ENCODE measurements at regions of chr17 and their contacts with region 1.

Region 1: DNA sequence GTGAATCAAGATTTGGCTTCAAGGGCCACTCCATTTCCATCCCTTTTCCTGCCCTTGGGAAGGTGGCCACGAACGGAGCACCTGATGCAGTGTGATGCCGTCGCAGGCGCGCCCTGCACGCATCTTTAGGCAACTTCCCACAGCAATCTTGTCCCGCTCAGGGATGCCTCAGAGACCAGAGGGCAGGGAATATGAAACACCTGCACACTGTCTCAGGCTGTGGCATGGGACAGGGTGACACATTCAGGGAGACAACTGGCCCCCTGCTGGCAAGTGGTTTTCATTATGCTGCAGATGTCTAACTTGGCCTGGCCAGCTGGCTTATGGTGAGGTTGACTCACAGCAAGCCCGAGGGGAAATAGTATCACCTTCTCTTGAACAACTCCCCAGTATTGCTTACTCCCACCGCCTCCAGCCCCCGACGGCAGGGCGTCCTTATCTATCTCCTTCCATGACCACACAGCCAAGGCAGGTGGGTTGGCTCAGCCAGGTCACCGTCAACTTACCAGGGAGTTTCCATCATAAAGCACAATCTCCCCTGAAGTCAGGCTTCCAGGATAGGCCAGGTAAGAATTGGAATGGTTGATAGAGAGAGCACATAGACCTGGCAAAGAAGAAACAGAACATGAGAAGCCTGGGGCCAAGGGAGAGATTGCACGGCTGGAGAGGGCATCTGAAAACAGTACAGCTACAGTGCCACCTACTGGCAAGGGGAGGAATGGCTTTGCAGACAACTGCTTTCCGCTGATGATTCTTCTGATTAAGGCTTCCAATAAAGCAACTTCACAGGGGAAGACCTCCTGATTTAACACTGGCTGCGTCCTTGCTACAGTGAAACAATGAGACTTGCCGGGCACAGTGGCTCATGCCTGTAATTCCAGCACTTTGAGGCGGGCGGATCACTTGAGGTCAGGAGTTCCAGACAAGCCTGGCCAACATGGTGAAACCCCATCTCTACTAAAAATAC is 21.1 kb downstream of the WIPI1 start:
- DNase-seq: peak; percentile 62 to 87 (median 82)
- ATAC-seq: peak; percentile 90
- H3K4me3 ChIP-seq: no peak overlapping the region
- H3K4me3 Mint-ChIP-seq: peak overlapping the region; percentile 3 to 78 (median 62)
- H3K27ac ChIP-seq: no peak overlapping the region
- H3K27ac Mint-ChIP-seq: peak overlapping the region; percentile 1 to 94 (median 41)
- H3K4me1 ChIP-seq: peaks cover 32% of the 10 kb centered on the region in 2 donors
- H3K4me1 Mint-ChIP-seq: peaks cover 30 to 67% (median 51%) of the 10 kb centered on the region in 7 donors
- H3K27me3 ChIP-seq: no peaks in the 10 kb centered on the region
- H3K27me3 Mint-ChIP-seq: no peaks in the 10 kb centered on the region

Region 2: DNA sequence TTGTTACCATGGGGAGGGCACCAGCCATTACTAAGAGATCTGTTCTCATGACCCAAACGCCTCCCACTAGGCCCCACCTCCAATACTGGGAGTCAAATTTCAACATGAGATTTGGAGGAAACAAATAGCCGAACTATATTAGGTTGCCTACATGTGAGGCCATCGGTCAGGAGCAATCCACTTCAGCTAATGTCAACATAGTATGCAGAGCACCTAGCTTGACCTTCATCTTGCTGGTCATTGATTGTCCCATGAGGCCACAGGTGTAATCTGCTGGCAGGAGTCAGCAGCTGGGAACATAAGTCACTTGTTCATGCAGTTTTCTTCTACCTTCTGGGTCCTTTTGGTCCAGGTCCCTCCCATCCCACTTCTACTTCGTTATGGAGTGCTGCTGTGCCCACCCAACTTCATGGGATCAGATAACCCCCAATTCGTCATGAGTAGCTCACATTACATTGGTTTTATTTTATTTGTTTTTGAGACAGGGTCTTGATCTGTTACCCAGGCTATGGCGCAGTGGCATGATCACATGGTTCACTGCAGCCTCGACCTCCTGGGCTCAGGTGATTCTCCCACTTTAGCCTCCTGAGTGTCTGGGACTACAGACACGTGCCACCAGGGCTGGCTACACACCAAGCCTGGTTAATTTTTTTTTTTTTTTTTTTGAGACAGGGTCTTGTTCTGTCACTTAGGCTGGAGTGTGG is 406.5 kb before region 1 on chr17:
- CTCF ChIA-PET with region 1: no interaction called
- POLR2A ChIA-PET with region 1: no interaction called
- intact Hi-C with region 1: no loop called
- DNase-seq: no peak
- ATAC-seq: no peak
- H3K4me3 ChIP-seq: no peak overlapping the region
- H3K4me3 Mint-ChIP-seq: no peak overlapping the region
- H3K27ac ChIP-seq: no peak overlapping the region
- H3K27ac Mint-ChIP-seq: peak overlapping the region in 1 of 9 donors; percentile 36
- H3K4me1 ChIP-seq: peaks cover 0 to 3% of the 10 kb centered on the region in 2 donors
- H3K4me1 Mint-ChIP-seq: peaks cover 0 to 3% (median 0%) of the 10 kb centered on the region in 7 donors
- H3K27me3 ChIP-seq: no peaks in the 10 kb centered on the region
- H3K27me3 Mint-ChIP-seq: peaks cover 0 to 7% (median 0%) of the 10 kb centered on the region in 5 donors

Region 3: GRCh38 chr17:68247445-68248198 is 188.5 kb before region 1 on chr17 and contains the start of gene AMZ2:
- CTCF ChIA-PET with region 1: interaction called, 5 read pairs
- POLR2A ChIA-PET with region 1: interaction called, 23 read pairs
- intact Hi-C with region 1: loop called in 1 of 2 experiments (anchors 1 kb)
- DNase-seq: peak; percentile 92 to 100 (median 97)
- ATAC-seq: peak; percentile 96
- H3K4me3 ChIP-seq: peak within 1 kb of the TSS; percentile 89
- H3K4me3 Mint-ChIP-seq: peak within 1 kb of the TSS; percentile 80 to 96 (median 92)
- H3K27ac ChIP-seq: peak within 1 kb of the TSS; percentile 99
- H3K27ac Mint-ChIP-seq: peak within 1 kb of the TSS; percentile 78 to 99 (median 97)
- H3K4me1 ChIP-seq: peaks cover 18 to 36% of the 10 kb centered on the region in 2 donors
- H3K4me1 Mint-ChIP-seq: peaks cover 11 to 52% (median 31%) of the 10 kb centered on the region in 7 donors
- H3K27me3 ChIP-seq: no peaks in the 10 kb centered on the region
- H3K27me3 Mint-ChIP-seq: no peaks in the 10 kb centered on the region
- total RNA-seq, gene AMZ2: 47.6 to 85.5 (median 73.8) TPM

Region 4: GRCh38 chr17:68317458-68317857 is 118.7 kb before region 1 on chr17:
- CTCF ChIA-PET with region 1: no interaction called
- POLR2A ChIA-PET with region 1: no interaction called
- intact Hi-C with region 1: no loop called
- DNase-seq: no peak
- ATAC-seq: no peak
- H3K4me3 ChIP-seq: no peak overlapping the region
- H3K4me3 Mint-ChIP-seq: no peak overlapping the region
- H3K27ac ChIP-seq: no peak overlapping the region
- H3K27ac Mint-ChIP-seq: no peak overlapping the region
- H3K4me1 ChIP-seq: peaks cover 27 to 33% of the 10 kb centered on the region in 2 donors
- H3K4me1 Mint-ChIP-seq: peaks cover 23 to 71% (median 46%) of the 10 kb centered on the region in 7 donors
- H3K27me3 ChIP-seq: no peaks in the 10 kb centered on the region
- H3K27me3 Mint-ChIP-seq: no peaks in the 10 kb centered on the region

Region 5: GRCh38 chr17:68346448-68346847 is 89.7 kb before region 1 on chr17:
- CTCF ChIA-PET with region 1: interaction called, 3 read pairs
- POLR2A ChIA-PET with region 1: interaction called, 4 read pairs
- intact Hi-C with region 1: loop called (anchors 1 to 5 kb)
- DNase-seq: peak; percentile 26 to 66 (median 50)
- ATAC-seq: peak; percentile 79
- H3K4me3 ChIP-seq: peak overlapping the region; percentile 37
- H3K4me3 Mint-ChIP-seq: peak overlapping the region; percentile 68 to 88 (median 81)
- H3K27ac ChIP-seq: peak overlapping the region; percentile 70
- H3K27ac Mint-ChIP-seq: peak overlapping the region; percentile 91 to 98 (median 96)
- H3K4me1 ChIP-seq: peaks cover 68 to 73% of the 10 kb centered on the region in 2 donors
- H3K4me1 Mint-ChIP-seq: peaks cover 58 to 80% (median 76%) of the 10 kb centered on the region in 7 donors
- H3K27me3 ChIP-seq: no peaks in the 10 kb centered on the region
- H3K27me3 Mint-ChIP-seq: no peaks in the 10 kb centered on the region

Region 6: DNA sequence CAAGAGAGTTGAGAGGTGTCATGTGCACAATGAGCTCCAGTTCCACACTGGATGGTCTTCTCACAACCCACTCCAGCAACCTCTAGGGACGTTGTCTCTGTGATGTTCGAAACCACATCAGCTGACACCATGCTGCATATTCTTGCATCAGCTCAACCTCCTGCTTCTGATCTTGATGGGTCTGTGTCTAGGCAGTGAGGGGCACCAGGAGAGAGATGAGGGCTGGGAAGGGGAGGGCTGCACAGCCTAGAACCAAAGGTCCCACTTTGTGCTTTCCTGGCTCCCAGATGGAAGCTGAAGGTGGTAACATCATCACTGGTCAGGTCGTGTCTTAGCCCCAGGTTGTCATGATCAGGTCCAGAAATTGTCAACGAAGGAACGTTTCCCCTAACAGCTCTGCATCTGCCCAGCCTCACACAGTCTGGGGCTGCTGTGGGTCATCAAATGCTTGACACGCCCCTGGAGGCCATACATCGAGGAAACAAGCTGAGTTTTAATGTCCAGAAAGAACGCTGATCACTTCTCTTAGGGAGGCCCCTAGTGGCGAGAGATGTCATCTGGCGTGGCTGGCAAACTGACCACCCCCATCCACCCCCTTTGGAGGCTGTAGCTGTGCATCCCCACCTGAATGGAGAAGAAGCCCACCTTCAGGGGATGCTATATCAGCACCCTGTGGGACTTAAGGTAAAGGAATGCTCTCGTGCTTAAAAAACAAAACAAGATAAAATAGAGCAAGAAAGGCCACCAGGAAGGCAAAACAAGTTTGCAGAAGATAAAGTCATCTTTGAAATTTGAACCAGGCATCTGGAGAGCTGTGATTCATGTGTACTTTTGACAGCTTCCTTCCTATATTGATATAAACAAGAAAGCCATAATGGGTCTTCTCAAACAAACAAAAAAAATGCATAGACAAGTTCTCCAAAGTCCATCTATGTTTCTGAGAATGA is 37.2 kb before region 1 on chr17:
- CTCF ChIA-PET with region 1: interaction called, 10 read pairs
- POLR2A ChIA-PET with region 1: interaction called, 4 read pairs
- intact Hi-C with region 1: loop called in 1 of 2 experiments (anchors 5 kb)
- DNase-seq: no peak
- ATAC-seq: peak; percentile 87
- H3K4me3 ChIP-seq: no peak overlapping the region
- H3K4me3 Mint-ChIP-seq: peak overlapping the region in 9 of 10 donors; percentile 0 to 73 (median 34)
- H3K27ac ChIP-seq: no peak overlapping the region
- H3K27ac Mint-ChIP-seq: peak overlapping the region in 5 of 9 donors; percentile 10 to 85 (median 48)
- H3K4me1 ChIP-seq: peaks cover 13 to 34% of the 10 kb centered on the region in 2 donors
- H3K4me1 Mint-ChIP-seq: peaks cover 15 to 37% (median 35%) of the 10 kb centered on the region in 7 donors
- H3K27me3 ChIP-seq: no peaks in the 10 kb centered on the region
- H3K27me3 Mint-ChIP-seq: no peaks in the 10 kb centered on the region

Region 7: DNA sequence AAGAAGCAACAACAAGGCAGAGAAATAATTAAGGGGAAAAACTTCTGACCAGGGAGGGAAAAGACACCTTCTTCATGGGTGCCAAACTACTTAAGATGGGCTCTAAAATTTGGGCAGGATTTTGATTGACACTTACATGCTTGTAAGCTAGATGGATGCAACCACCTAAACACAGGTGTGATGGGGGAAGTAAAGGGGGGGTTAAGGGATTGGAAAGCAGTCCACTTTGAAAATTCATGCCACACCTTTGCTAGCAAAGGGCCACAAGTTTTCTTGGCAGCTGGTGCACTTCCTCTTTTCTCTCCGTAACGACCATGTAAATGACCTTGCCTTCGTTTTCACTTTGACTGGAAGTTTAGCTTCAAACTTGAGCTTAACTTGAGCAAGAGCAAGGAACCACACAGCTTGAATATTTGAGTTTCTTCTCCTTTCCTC is 61.7 kb after region 1 on chr17:
- CTCF ChIA-PET with region 1: no interaction called
- POLR2A ChIA-PET with region 1: no interaction called
- intact Hi-C with region 1: no loop called
- DNase-seq: no peak
- ATAC-seq: peak; percentile 50
- H3K4me3 ChIP-seq: no peak overlapping the region
- H3K4me3 Mint-ChIP-seq: peak overlapping the region in 2 of 10 donors; percentile 10 to 60
- H3K27ac ChIP-seq: no peak overlapping the region
- H3K27ac Mint-ChIP-seq: peak overlapping the region in 1 of 9 donors; percentile 84
- H3K4me1 ChIP-seq: no peaks in the 10 kb centered on the region
- H3K4me1 Mint-ChIP-seq: peaks cover 10 to 36% (median 14%) of the 10 kb centered on the region in 7 donors
- H3K27me3 ChIP-seq: no peaks in the 10 kb centered on the region
- H3K27me3 Mint-ChIP-seq: peaks cover 0 to 4% (median 0%) of the 10 kb centered on the region in 5 donors

Region 8: DNA sequence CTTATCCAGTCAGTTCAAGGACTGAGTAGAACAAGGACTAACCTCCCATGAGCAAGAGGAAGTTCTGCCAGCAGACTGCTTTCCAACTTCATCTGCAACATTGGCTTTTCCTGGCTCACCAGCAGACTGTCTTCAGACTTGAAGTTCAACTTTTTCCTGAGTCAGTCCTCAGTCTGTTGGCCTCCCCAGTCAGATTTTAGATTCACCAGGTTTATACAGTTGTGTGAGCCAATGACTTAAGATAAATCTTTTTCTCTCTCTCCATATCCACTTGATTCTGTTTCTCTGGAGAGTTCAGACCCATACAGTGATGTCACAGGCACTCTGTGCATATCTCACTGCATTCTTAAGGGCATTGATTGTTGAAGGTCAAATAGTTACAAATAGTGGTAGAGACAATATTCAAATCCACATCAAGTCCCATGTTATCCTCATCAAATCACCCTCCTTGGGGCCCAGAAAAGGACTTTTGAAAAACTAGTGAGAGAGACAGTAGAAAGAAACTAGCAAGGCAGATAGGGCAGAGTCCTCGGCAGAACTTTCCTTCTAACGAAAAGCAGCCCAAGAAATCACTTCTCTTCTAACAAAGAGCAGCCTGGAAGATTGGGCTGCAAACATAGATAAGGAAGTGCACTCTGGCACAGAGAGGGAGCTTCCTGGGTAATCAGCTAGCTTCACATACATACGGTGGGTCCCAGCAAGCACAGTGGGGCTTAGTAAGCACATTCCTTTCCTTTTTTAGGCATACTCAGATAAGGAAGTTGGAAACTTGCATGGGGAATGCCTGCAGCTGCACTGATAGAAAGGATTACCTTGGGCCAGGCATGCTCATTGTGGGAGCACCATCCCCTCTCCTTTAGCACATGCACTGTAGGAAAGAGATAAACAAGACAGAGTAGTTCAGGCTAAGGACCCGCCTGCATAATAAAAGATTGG is 297.4 kb after region 1 on chr17:
- CTCF ChIA-PET with region 1: no interaction called
- POLR2A ChIA-PET with region 1: no interaction called
- intact Hi-C with region 1: no loop called
- DNase-seq: no peak
- ATAC-seq: no peak
- H3K4me3 ChIP-seq: no peak overlapping the region
- H3K4me3 Mint-ChIP-seq: no peak overlapping the region
- H3K27ac ChIP-seq: no peak overlapping the region
- H3K27ac Mint-ChIP-seq: no peak overlapping the region
- H3K4me1 ChIP-seq: no peaks in the 10 kb centered on the region
- H3K4me1 Mint-ChIP-seq: no peaks in the 10 kb centered on the region
- H3K27me3 ChIP-seq: peaks cover 0 to 3% of the 10 kb centered on the region in 2 donors
- H3K27me3 Mint-ChIP-seq: peaks cover 13 to 22% (median 16%) of the 10 kb centered on the region in 5 donors

Measured in naive thymus-derived CD4-positive, alpha-beta T cell (primary cell).